Activated CD8-positive, alpha-beta T cell treated with anti-CD3 and anti-CD28 coated beads, Interleukin-2, amount 10 ng/mL, durations not matched to agents 7 days and 5 days (primary cell): ENCODE measurements at regions of chr2 and their contacts with region 1.

Region 1: DNA sequence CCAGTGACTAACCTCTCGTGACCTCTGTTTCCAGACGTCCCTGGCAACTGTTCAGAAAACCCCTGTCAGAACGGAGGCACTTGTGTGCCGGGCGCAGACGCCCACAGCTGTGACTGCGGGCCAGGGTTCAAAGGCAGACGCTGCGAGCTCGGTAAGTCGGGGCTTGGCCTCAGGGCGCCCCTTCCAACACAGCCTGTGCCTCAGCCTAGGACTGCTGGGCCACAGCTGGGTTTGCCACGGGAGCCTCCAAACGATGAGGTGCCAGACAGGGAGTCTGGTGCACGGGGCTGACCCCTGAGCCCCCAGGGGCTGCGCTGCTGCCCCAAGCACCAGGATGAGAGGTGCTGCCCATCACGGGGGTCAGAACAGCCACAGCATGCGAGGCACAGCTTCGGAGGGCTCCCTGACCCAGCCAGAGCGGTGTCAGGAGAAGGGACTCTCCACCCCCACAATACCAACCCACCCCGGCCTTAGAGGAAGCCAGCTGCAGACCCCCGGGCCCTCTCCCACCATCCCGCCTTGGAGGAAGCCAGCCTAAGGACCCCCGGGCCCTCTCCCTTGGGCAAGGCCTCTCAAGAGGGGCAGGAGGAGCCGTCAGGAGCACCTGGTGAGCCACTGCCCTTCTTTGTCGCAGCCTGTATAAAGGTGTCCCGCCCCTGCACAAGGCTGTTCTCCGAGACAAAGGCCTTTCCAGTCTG is 20.3 kb downstream of the MTERF4 start:
- DNase-seq: no peak
- ATAC-seq: no peak
- H3K4me3 Mint-ChIP-seq: no peak overlapping the region
- H3K27ac Mint-ChIP-seq: no peak overlapping the region
- H3K4me1 Mint-ChIP-seq: no peaks in the 10 kb centered on the region
- H3K27me3 Mint-ChIP-seq: no peaks in the 10 kb centered on the region

Region 2: DNA sequence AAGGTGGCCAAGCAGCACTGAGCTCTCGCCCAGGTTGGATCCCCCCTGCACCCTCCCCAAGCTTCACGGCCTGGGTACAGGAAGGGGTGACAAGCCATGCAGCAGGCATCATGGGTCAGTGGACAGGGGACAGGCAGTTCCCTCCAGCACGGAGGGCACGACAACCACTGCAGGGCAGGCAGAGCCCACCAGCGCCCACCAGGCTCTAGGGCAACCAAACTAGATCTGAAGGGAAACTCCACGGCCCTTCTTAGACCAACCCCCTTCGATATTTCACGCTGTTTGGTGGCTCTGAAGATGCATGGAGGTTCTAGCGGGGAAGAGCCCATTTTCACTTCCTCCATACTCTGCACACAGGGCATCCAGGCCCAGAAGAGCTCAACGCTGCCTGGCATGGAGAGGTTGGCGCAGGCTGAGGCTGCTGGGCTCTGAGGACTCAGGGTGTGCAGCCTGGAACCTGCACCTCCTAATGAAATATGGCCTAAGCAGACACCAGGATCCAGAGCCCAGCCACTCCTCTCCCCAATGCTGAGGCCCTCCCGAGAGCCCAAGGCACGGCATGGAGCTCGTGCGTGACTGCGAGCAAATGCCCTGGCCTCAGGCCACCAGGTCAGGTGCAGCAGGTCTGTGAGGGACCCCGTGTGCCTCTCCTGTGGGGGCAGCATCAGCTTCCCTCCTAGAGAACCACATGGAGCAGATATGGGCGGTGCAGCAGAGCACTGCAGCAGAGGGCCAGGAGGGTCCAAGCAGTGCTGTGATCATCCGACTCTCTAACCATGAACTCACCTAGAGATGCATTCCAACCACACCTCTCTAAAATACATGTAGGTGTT is 29.0 kb after region 1 on chr2:
- CTCF ChIA-PET with region 1: interaction called, 10 read pairs
- POLR2A ChIA-PET with region 1: no interaction called
- DNase-seq: no peak
- ATAC-seq: peak; percentile 38
- H3K4me3 Mint-ChIP-seq: peak overlapping the region; percentile 73
- H3K27ac Mint-ChIP-seq: peak overlapping the region; percentile 70
- H3K4me1 Mint-ChIP-seq: peaks cover 51% of the 10 kb centered on the region
- H3K27me3 Mint-ChIP-seq: no peaks in the 10 kb centered on the region